Activated CD4-positive, alpha-beta memory T cell treated with anti-CD3 and anti-CD28 coated beads for 36 hours (primary cell): ENCODE measurements at regions of chr1 and their contacts with region 1.

Region 1: DNA sequence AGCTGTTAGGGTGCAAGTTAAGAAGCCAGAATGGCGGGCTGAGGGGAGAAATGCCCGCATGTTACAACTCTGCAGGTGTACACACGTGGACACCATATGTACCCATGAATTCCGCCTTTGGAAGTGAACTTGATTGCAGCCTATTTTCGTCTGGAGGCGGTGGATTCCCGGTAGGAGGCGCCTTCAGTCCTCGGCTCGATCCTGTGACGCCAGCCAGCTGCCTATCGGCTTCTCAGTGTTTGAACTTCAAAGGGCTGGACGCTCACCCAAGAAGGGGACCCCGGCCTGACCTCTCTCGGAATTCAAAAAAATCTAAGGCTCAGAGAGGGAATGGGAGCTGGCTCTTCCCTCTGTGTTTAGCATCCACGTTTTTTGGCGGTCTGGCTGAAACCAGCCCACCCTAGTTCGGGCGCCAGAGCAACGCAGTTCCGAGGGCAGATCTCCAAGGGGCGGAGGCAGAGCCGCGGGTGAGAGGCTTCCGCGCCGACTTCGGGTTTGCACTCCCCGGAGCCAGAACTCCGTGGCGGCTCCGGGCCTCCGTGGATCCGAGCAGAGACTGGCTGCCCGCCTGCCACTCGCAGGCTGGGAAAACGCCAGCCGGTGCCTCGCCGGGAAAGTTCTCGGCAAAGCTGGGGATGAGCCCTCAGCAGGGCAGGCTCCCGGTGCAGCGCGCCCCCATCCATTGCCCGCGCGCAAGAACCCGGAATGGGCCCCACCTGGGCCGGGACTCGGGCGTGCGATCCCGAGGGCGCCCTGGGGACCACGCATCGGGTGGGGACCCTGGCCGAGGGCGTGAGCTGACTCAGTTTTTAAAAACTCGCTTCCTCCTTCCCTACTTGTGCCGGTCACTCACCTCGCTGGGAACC is 996 bp upstream of the TMEM51 start:
- DNase-seq: peak; percentile 43
- H3K4me3 Mint-ChIP-seq: peak overlapping the region; percentile 7
- H3K27ac Mint-ChIP-seq: no peak overlapping the region
- H3K4me1 Mint-ChIP-seq: peaks cover 25% of the 10 kb centered on the region
- H3K27me3 Mint-ChIP-seq: peaks cover 41% of the 10 kb centered on the region

Region 2: GRCh38 chr1:15272009-15272788 is 119.6 kb after region 1 on chr1:
- CTCF ChIA-PET with region 1: interaction called, 6 read pairs
- POLR2A ChIA-PET with region 1: no interaction called
- intact Hi-C with region 1: loop called (anchors 1 kb)
- DNase-seq: peak; percentile 61
- H3K4me3 Mint-ChIP-seq: no peak overlapping the region
- H3K27ac Mint-ChIP-seq: no peak overlapping the region
- H3K4me1 Mint-ChIP-seq: peaks cover 2% of the 10 kb centered on the region
- H3K27me3 Mint-ChIP-seq: peaks cover 21% of the 10 kb centered on the region

Region 3: DNA sequence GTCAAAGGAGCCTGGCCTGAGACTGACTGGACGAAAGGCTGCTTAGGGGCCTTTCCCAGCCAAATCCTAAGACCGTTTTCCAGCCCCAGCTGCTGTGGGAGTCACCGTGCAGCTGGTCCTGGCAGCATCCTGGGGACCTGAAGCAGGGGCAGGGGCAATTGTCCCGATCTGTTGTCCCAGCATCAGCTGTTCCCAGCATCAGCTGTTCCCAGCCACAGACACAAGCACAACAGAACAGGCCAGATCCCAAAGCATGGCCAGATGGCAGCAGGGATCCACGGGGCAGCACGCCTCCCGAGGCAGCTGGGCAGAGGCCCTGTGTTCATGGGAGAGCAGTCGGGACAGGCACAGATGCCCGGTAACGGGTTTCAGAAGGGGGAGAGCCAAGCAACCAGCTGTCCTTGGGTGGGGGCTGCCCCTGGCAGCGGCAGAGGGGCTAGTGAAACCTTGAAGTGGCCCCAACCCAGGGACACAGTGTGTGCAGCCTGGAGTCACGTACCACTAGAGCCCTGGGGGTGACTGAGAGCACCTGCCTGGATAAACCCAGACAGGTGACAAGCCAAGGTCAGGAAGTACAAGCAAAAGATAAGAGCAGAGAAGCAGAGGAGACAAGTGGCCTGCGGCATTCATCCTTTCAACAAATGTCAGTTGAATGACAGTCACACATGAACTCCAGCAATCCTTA is 336.6 kb after region 1 on chr1:
- CTCF ChIA-PET with region 1: no interaction called
- POLR2A ChIA-PET with region 1: no interaction called
- intact Hi-C with region 1: no loop called
- DNase-seq: no peak
- H3K4me3 Mint-ChIP-seq: no peak overlapping the region
- H3K27ac Mint-ChIP-seq: no peak overlapping the region
- H3K4me1 Mint-ChIP-seq: no peaks in the 10 kb centered on the region
- H3K27me3 Mint-ChIP-seq: no peaks in the 10 kb centered on the region